Activated naive CD8-positive, alpha-beta T cell treated with anti-CD3 and anti-CD28 coated beads, Interleukin-2, amount 10 ng/mL, durations not matched to agents 7 days and 5 days (primary cell): ENCODE measurements at regions of chr14 and their contacts with region 1.

Region 1: GRCh38 chr14:101809671-101810514 is 48.4 kb downstream of the PPP2R5C start:
- DNase-seq: peak; percentile 77
- ATAC-seq: peak; percentile 90
- H3K4me3 Mint-ChIP-seq: peak overlapping the region; percentile 86
- H3K27ac Mint-ChIP-seq: peak overlapping the region; percentile 95
- H3K4me1 Mint-ChIP-seq: peaks cover 36% of the 10 kb centered on the region
- H3K27me3 Mint-ChIP-seq: no peaks in the 10 kb centered on the region

Region 2: DNA sequence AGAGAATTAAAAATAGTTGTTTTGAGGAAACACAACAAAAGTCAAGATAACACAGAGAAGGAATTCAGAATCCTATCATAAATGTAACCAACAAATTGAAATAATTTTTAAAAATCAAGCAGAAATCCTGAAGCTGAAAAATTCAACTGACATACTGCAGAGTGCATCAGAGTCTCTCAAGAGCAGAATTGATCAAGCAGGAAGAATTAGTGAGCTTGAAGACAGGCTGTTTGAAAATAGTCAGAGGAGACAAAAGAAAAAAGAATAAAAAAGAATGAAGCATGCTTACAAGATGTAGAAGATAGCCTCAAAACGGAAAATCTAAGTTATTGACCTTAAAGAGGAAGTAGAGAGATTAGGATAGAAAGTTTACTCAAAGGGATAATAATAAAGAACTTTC is 114.2 kb before region 1 on chr14:
- POLR2A ChIA-PET with region 1: no interaction called
- DNase-seq: no peak
- ATAC-seq: no peak
- H3K4me3 Mint-ChIP-seq: no peak overlapping the region
- H3K27ac Mint-ChIP-seq: no peak overlapping the region
- H3K4me1 Mint-ChIP-seq: no peaks in the 10 kb centered on the region
- H3K27me3 Mint-ChIP-seq: peaks cover 43% of the 10 kb centered on the region

Region 3: DNA sequence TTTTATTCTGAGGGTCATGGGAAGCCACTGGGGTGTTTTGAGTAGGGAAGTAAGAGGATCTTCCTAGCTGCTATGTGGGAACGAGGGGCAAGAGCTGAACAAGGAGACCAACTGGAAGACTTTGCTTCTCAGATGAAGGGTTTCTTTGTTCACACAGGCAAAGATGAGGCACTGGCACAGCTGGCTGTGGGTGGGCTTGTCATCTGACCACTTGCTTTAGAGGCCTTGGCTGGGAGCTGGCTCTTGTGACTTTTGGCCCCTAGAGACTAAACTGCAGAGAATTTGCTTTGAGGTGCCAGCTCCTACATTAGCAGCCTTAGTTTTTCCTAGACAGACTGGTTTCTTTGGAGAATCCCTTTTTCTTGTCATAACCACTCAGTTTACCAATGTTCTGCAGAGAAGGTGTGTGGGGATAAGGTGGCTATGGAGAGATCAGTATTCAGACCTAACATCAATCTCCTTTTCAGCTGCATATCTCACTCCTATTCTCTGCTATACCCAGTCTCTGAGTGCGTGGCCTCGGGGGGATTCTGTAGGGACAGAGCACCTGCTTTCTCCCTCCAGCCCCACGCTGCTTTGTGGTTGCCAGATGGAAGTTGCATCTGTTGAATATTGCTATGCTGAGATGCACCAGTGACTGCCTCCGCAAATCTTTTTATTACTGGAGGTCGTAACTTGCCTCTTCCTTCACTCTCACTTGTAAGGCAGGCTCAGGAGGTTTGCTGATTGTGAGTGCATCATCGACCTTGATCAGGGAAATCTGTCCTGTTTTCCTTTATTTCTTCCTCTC is 35.7 kb before region 1 on chr14:
- POLR2A ChIA-PET with region 1: interaction called, 12 read pairs
- DNase-seq: no peak
- ATAC-seq: no peak
- H3K4me3 Mint-ChIP-seq: no peak overlapping the region
- H3K27ac Mint-ChIP-seq: no peak overlapping the region
- H3K4me1 Mint-ChIP-seq: peaks cover 5% of the 10 kb centered on the region
- H3K27me3 Mint-ChIP-seq: peaks cover 4% of the 10 kb centered on the region

Region 4: DNA sequence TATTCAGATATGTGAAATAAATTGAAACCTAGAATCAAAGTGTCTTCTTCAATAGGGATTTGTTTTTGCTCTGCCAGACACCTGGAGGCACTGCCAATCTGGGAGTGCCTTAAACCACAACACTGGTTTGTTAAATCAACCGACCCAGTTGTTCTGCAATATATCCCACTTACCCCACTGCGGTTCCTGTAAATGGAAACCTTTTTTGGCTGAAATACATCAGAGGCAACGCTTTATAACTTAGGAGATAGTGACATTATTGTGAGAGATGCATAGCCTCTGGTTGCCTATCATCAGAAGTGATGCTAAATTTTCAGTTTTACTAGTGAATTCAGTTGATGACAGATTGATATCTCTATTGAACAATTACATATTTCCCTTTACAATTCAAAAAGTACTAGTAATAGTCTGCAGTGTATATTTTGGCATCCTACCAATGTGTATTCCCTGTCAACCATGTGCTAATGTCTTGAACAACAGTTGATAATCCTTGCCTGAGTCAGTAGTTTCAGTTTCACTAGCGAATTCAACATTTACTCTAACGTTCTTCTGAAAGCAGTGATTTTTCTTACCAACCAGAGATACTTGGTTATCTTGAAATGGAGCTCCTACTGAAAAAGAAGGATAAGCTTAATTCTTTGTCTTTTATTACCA is 17.8 kb before region 1 on chr14:
- POLR2A ChIA-PET with region 1: interaction called, 22 read pairs
- DNase-seq: no peak
- ATAC-seq: peak; percentile 79
- H3K4me3 Mint-ChIP-seq: peak overlapping the region; percentile 68
- H3K27ac Mint-ChIP-seq: peak overlapping the region; percentile 84
- H3K4me1 Mint-ChIP-seq: peaks cover 13% of the 10 kb centered on the region
- H3K27me3 Mint-ChIP-seq: no peaks in the 10 kb centered on the region

Region 5: GRCh38 chr14:101823511-101824120 is 13.7 kb after region 1 on chr14:
- POLR2A ChIA-PET with region 1: interaction called, 231 read pairs
- DNase-seq: peak; percentile 58
- ATAC-seq: peak; percentile 57
- H3K4me3 Mint-ChIP-seq: peak overlapping the region; percentile 86
- H3K27ac Mint-ChIP-seq: peak overlapping the region; percentile 99
- H3K4me1 Mint-ChIP-seq: peaks cover 77% of the 10 kb centered on the region
- H3K27me3 Mint-ChIP-seq: no peaks in the 10 kb centered on the region

Region 6: DNA sequence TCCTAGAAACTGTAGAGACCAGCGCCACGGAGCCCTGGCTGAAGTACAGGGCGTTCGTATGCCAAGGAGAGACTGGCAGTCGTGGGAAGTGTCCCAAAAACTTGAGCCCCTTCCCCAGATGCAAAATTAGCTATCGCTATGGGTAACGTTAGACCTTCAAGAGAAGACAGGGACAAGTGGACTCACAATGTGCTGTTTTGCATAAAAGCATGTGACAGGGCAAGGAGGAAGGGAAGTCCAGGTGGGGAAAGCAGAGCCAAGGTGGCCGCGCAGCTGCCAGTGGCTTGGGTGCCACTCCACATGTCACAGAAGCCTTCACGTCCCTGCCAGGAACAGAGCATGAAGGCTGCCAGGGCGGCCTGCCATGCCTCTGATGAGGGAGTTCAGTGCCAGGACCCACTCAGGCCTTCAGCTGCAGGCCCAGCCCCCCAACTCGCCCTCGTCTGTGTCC is 93.2 kb after region 1 on chr14:
- POLR2A ChIA-PET with region 1: no interaction called
- DNase-seq: no peak
- ATAC-seq: no peak
- H3K4me3 Mint-ChIP-seq: no peak overlapping the region
- H3K27ac Mint-ChIP-seq: no peak overlapping the region
- H3K4me1 Mint-ChIP-seq: no peaks in the 10 kb centered on the region
- H3K27me3 Mint-ChIP-seq: no peaks in the 10 kb centered on the region